Right ventricle myocardium superior (tissue), 1 donor: ENCODE measurements at regions of chr11 and their contacts with region 1.

Region 1: DNA sequence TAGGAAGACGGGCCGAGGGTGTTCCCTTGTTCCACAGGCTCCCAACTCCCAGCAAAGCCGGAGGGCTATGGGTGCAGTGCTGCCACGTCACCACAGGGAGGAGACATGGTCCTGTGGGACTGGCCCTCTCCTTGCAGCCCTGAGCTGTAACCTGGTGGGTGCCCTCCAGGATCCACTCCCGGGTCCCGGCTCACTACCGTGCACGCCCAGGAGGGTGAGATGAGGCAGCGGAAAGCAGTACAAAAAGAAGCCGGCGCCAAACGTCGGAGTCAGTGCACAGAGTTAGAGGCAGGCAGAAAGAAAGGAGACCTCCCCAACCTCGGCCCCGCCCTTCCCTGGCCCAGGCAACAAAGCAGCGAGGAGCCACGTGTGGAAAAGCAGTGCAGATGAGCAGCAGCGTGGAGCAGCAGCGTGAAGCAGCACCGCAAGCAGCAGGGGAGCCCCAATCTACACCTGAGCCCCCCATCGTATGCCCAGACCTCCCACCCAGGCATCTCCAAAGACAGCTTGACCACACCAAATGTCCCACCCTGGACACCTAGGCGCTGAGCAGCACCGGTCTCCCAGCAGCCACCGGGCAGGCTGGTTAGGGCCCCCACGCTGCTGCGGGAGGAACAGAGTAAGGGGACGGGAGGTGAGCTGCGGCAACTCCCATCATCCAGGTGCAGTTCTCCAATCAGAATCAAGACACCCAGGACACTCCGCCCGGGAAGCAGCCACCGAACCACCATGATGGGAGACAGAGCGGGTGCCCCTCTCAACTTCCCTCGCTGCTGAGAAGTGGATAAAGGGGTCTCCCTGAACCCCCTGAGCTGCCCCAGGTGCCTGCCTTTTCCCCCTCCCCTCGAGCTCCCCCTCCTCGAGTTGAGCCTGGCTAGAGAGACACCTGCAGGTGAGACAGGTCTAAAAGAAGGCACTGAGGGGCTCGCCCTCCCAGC is 28.8 kb downstream of the IGSF9B start:
- DNase-seq: peak; percentile 78
- ATAC-seq: peak; percentile 80

Region 2: GRCh38 chr11:133916784-133917440 is 11.0 kb before region 1 on chr11:
- intact Hi-C with region 1: no loop called
- DNase-seq: no peak
- ATAC-seq: no peak

Region 3: GRCh38 chr11:134139873-134140331 is 211.9 kb after region 1 on chr11:
- intact Hi-C with region 1: loop called (anchors 5 kb)
- DNase-seq: no peak
- ATAC-seq: peak; percentile 94